ENCODE measurements at regions of chr17 and their contacts with region 1.

Region 1: DNA sequence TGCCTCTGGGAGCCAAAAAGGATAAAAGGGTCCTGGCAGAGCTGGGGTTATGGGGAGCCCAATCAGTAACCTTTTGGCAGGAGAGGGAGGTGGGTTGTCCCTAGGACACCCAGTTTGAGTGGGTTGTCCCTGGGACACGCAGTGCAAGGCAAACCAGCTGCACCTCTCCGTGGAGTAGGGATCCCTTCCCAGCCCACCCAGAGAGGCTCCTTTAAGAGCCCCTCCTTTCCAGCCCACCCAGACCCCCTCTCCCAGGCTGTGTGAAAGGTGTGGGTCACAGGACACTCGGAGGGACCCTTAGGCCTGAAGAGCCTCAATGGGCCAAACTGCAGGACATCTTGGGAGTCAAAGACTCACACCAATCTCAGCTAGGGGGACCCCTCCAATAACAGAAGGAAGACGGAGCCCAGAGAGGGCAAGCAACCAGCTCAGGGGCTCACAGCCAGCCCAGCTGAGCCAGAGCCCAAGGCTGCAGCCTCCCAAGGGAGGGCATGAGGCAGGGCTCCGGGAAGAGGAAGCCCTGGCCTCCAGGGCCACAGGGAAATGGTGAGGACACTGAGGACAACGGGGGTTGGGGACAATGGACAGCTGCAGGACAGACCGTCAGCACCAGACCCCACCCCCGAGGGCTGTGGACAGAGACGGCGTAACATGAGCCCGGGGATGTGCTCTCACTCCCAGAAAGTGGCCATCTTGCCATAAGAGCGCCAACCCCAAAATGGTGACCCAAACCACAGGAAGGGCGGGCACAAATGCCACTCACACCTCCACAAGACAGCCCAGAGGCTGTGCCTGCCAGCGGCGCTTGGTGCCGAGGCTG is 10.1 kb downstream of the PIMREG start:
- DNase-seq: no peak
- H3K4me3 ChIP-seq: no peak overlapping the region
- H3K27ac ChIP-seq: no peak overlapping the region
- H3K4me1 ChIP-seq: peaks cover 20% of the 10 kb centered on the region
- H3K27me3 ChIP-seq: peaks cover 0 to 3% of the 10 kb centered on the region in 2 experiments
- CTCF ChIP-seq: no peak
- POLR2A ChIP-seq: no peak

Region 2: GRCh38 chr17:6303664-6304063 is 150.7 kb before region 1 on chr17:
- CTCF ChIA-PET with region 1: no interaction called
- POLR2A ChIA-PET with region 1: no interaction called
- dilution Hi-C with region 1: no loop called
- intact Hi-C with region 1: no loop called
- DNase-seq: peak; percentile 53
- H3K4me3 ChIP-seq: no peak overlapping the region
- H3K27ac ChIP-seq: no peak overlapping the region
- H3K4me1 ChIP-seq: no peaks in the 10 kb centered on the region
- H3K27me3 ChIP-seq: peaks cover 0 to 6% of the 10 kb centered on the region in 2 experiments
- CTCF ChIP-seq: no peak
- POLR2A ChIP-seq: no peak

Region 3: DNA sequence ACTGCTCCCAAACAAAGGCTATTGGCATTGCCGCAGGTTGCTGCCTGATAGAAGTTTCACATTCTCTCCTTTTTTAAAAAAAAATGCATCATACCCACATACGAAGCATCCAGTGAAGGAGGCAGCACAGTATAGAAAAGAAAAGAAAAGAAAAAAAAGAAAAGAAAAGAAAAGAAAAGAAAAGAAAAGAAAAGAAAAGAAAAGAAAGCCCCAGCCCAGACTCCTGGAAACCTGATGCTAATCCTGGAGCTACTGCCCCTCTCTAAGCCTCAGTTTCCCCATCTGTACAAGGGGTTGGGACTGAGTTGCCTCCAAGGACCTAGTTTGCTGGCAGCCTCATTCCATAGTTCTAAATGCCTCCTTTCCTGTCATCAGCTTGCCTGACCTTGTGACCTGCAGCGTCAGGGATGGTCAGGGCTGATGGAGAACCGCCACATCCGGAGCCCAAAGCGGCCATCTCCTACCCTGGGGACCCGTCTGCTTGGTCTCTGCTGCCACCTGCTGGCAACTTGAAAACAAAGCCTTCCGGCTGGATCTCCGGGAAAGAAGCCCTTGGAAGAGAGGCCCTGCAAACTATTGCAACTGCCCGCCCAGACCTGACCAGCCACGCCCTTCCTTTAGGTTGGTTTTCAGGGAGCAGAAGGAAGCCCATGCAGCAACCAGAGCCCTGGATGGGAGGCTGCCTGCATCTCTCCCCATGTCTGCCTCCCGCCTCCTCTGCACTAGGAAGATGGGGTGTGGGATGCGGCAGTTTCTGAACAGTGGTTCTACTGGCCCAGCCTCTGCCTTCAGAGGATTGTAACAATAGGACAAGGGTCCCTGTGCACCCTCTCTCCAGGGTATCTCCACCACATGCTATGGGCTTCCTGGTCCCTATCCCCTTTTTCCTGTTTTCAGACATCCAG is 32.4 kb before region 1 on chr17:
- CTCF ChIA-PET with region 1: no interaction called
- POLR2A ChIA-PET with region 1: no interaction called
- dilution Hi-C with region 1: no loop called
- intact Hi-C with region 1: no loop called
- DNase-seq: peak; percentile 51
- H3K4me3 ChIP-seq: no peak overlapping the region
- H3K27ac ChIP-seq: no peak overlapping the region
- H3K4me1 ChIP-seq: no peaks in the 10 kb centered on the region
- H3K27me3 ChIP-seq: no peaks in the 10 kb centered on the region
- CTCF ChIP-seq: peak; percentile 80 to 81
- POLR2A ChIP-seq: no peak

Region 4: DNA sequence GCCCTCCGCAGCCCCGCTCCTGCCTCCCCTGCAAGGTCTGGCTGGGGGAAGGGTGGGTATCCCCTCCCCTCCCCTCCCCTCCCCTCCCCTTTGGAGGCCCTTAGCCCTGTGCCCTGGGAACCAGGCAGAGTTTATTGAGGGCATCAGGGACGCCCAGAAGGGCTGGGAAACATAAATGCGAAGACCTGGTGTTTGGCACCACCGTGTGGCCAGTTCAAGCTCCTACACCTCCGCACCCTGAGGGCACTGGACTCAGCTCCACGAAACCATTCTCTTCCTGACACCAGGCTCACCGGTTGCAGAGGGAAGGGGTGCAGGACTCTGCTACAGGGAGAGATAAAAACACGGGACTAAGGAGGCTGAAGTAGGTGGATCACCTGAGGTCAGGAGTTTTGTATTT is 18.4 kb before region 1 on chr17:
- CTCF ChIA-PET with region 1: interaction called, 10 read pairs
- POLR2A ChIA-PET with region 1: no interaction called
- dilution Hi-C with region 1: no loop called
- intact Hi-C with region 1: no loop called
- DNase-seq: peak; percentile 51
- H3K4me3 ChIP-seq: no peak overlapping the region
- H3K27ac ChIP-seq: no peak overlapping the region
- H3K4me1 ChIP-seq: no peaks in the 10 kb centered on the region
- H3K27me3 ChIP-seq: peaks cover 4 to 20% of the 10 kb centered on the region in 2 experiments
- CTCF ChIP-seq: peak; percentile 76 to 79
- POLR2A ChIP-seq: no peak

Region 5: GRCh38 chr17:6574687-6575595 is 120.6 kb after region 1 on chr17:
- CTCF ChIA-PET with region 1: no interaction called
- POLR2A ChIA-PET with region 1: no interaction called
- dilution Hi-C with region 1: no loop called
- intact Hi-C with region 1: no loop called
- DNase-seq: peak; percentile 69
- H3K4me3 ChIP-seq: no peak overlapping the region
- H3K27ac ChIP-seq: peak overlapping the region; percentile 19
- H3K4me1 ChIP-seq: peaks cover 14% of the 10 kb centered on the region
- H3K27me3 ChIP-seq: no peaks in the 10 kb centered on the region
- CTCF ChIP-seq: no peak
- POLR2A ChIP-seq: no peak

Measured in endothelial cell of umbilical vein (primary cell).